ENCODE measurements at regions of chr17 and their contacts with region 1.

Region 1: DNA sequence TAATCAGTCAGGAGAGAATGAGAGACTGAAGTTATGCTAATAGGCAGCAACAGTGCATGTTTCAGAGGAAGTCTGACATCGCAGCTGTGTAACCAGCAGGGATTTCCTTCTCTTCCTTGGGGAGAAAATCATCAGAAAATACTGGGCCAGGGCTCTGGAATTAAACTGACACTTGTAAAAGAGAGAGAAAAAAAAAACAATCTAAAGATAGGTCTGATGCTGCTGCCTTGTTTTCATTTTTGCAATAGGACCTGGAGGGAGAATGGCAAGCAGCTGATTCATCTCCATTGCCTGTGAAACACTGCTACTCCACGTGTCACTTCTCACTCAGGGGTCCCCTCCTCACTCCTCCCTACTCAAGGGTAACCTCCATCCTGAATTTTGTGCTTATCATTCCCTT is 17.7 kb upstream of the CORO6 start:
- DNase-seq: peak; percentile 57
- H3K4me3 ChIP-seq: no peak overlapping the region
- CTCF ChIP-seq: no peak

Region 2: DNA sequence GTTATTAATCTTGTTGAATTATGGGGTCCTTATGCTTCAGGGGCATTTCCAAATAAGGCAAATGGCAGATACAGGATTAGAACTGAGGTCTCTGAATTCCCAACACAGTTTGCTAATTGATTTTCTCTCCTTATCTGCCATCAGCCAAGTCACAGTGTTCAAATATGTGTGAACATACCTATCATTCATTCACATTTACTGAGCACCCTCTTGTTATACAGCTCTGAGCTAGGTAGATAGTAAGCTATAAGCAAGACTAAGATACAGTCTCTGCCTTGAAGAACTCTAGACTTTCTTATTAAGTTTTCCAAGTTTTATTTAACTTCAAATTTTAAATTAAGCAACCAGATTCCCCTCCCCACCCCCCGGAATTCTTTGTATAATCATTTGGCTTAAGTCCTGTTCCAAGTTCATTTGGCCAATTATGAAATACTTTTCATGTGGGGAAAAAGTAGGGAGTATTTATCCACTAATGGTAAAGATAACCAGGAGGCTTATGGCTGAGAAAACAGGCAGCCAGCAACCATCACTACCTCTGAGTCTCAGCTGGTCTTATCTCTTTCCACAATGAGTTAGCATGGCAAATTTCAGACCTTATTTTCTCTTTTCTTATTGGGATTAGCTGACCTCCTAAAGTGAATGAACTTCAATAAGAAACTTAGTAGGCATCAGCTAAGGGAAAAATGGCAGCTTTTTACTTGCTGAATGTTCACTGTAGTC is 13.7 kb after region 1 on chr17:
- CTCF ChIA-PET with region 1: interaction called, 18 read pairs
- POLR2A ChIA-PET with region 1: no interaction called
- DNase-seq: no peak
- H3K4me3 ChIP-seq: no peak overlapping the region
- CTCF ChIP-seq: no peak

Region 3: GRCh38 chr17:29782917-29783316 is 142.5 kb after region 1 on chr17:
- CTCF ChIA-PET with region 1: interaction called, 170 read pairs
- POLR2A ChIA-PET with region 1: no interaction called
- DNase-seq: no peak
- H3K4me3 ChIP-seq: no peak overlapping the region
- CTCF ChIP-seq: no peak

Region 4: GRCh38 chr17:29802246-29802645 is 161.8 kb after region 1 on chr17:
- CTCF ChIA-PET with region 1: interaction called, 28 read pairs
- POLR2A ChIA-PET with region 1: no interaction called
- DNase-seq: no peak
- H3K4me3 ChIP-seq: no peak overlapping the region
- CTCF ChIP-seq: no peak

Region 5: DNA sequence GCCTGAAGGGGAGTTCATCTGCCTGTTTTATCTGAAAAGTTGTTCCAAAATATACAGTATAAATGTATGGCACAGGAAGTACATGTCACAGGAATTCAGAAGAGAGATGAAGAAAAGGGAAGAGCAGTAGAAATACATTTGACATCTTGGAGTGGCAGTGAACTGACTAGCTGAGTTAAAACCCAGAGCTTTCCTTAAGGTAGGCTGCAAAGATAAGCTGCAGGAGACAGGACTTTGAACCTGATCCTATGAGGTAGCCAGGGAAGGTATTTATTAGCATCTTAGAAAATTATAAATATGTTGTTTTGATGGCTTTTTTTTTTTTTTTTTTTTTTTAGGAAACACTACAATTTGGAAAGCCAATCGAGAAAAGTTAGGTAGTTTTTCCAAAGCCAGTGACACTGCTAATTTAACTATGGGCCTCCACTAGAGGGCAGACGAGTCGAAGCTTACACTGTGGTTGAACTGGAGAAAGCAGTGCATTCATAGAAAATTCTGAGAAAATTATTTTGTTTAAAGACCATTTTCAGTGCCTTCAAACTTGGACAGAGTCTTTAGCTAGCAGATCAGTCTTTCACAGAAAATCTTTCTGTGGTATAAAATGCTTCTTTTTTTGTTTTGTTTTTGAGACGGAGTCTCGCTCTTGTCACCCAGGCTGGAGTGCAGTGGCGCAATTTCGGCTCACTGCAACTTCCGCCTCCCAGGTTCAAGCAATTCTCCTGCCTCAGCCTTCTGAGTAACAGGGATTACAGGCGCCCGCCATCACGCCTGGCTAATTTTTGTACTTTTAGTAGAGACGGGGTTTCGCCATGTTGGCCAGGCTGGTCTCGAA is 167.3 kb after region 1 on chr17:
- CTCF ChIA-PET with region 1: interaction called, 28 read pairs
- POLR2A ChIA-PET with region 1: no interaction called
- DNase-seq: no peak
- H3K4me3 ChIP-seq: no peak overlapping the region
- CTCF ChIP-seq: peak; percentile 67

Region 6: DNA sequence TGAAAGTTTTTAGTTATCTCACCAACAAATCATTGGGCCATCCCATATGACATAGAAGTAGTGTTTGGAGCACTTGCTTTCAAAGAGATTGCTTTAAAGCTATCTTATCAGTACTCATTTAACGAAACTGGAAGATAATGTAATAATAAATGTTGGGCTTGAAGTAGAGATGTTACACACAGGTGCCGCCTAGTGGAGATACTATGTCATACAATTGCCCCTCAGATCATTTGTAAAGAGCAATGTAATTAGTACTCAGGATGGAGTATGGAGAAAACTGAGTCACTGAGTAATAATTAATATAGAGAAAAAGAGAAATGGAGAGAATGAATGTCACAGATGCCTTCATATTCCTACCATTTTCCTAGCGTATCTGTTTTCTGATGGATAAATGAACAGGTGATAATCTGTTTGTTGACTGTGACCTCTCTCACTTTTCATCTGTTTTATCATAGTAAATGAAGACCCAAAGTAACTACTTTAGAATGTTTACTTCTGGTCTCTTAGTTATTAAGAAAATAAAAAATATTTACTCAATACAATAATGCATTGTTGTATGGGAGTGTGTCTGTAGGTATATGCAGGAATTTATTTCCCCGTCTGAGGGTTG is 381.4 kb after region 1 on chr17:
- CTCF ChIA-PET with region 1: interaction called, 11 read pairs
- POLR2A ChIA-PET with region 1: no interaction called
- DNase-seq: no peak
- H3K4me3 ChIP-seq: no peak overlapping the region
- CTCF ChIP-seq: peak; percentile 69

Measured in AG04449 (cell line).